ENCODE measurements at regions of chr9 and their contacts with region 1.

Region 1: GRCh38 chr9:91422758-91423711 is 597 bp downstream of the NFIL3 start:
- DNase-seq: peak; percentile 61 to 72 (median 67)
- H3K4me3 ChIP-seq: peak overlapping the region; percentile 51 to 88
- H3K4me3 Mint-ChIP-seq: peak overlapping the region; percentile 86 to 98 (median 92)
- H3K27ac ChIP-seq: no peak overlapping the region
- H3K27ac Mint-ChIP-seq: peak overlapping the region; percentile 23 to 95 (median 84)
- H3K4me1 ChIP-seq: peaks cover 36% of the 10 kb centered on the region
- H3K4me1 Mint-ChIP-seq: peaks cover 35 to 46% (median 41%) of the 10 kb centered on the region in 4 donors
- H3K27me3 ChIP-seq: peaks cover 18% of the 10 kb centered on the region
- H3K27me3 Mint-ChIP-seq: peaks cover 28 to 29% of the 10 kb centered on the region in 2 donors

Region 2: DNA sequence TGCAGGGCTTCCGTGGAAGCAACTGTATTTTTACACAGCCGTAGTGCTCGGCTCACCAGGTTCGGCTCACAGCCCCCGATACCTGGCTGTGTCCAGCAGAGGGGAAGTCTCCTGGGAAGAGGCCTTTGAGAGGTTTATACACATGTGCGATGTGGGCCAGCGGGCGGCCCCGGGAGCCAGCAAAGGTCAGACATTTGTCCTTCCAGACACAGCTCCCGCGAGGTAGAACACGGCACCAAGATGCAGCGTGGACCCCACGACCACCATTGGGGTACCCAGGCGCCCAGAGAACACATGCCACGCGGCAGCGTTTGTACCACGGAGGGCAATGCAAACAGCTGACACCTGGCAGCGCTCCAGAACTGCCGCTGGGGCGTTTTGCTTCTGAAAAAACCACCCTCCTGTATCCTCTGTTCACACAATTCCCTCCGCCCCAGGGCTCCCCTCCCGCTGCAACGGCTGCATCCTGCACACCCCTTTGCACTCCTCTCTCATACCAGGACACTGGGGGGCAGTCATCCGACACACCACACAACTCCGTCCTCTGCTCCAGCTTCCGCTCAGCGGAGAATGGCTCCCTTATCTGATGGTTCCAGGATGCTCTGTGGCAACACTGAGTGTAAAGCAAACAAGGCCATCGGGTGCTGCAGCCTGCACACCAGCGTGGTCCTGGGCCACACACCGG is 386.1 kb before region 1 on chr9:
- CTCF ChIA-PET with region 1: interaction called, 121 read pairs
- POLR2A ChIA-PET with region 1: interaction called, 5 read pairs
- intact Hi-C with region 1: loop called (anchors 1 kb)
- DNase-seq: peak; percentile 42 to 61 (median 51)
- H3K4me3 ChIP-seq: no peak overlapping the region
- H3K4me3 Mint-ChIP-seq: peak overlapping the region in 3 of 8 donors; percentile 33 to 72 (median 52)
- H3K27ac ChIP-seq: no peak overlapping the region
- H3K27ac Mint-ChIP-seq: peak overlapping the region in 1 of 7 donors; percentile 25
- H3K4me1 ChIP-seq: peaks cover 12% of the 10 kb centered on the region
- H3K4me1 Mint-ChIP-seq: peaks cover 11 to 15% (median 12%) of the 10 kb centered on the region in 4 donors
- H3K27me3 ChIP-seq: no peaks in the 10 kb centered on the region
- H3K27me3 Mint-ChIP-seq: peaks cover 13 to 15% of the 10 kb centered on the region in 2 donors

Region 3: GRCh38 chr9:91193658-91194391 is 229.2 kb before region 1 on chr9:
- CTCF ChIA-PET with region 1: interaction called, 4 read pairs
- POLR2A ChIA-PET with region 1: no interaction called
- intact Hi-C with region 1: loop called (anchors 1 kb)
- DNase-seq: peak; percentile 68 to 75 (median 71)
- H3K4me3 ChIP-seq: peak overlapping the region; percentile 38 to 56
- H3K4me3 Mint-ChIP-seq: peak overlapping the region; percentile 87 to 96 (median 91)
- H3K27ac ChIP-seq: no peak overlapping the region
- H3K27ac Mint-ChIP-seq: peak overlapping the region; percentile 84 to 95 (median 89)
- H3K4me1 ChIP-seq: peaks cover 30% of the 10 kb centered on the region
- H3K4me1 Mint-ChIP-seq: peaks cover 16 to 38% (median 23%) of the 10 kb centered on the region in 4 donors
- H3K27me3 ChIP-seq: no peaks in the 10 kb centered on the region
- H3K27me3 Mint-ChIP-seq: no peaks in the 10 kb centered on the region

Region 4: GRCh38 chr9:91312717-91313344 is 110.2 kb before region 1 on chr9:
- CTCF ChIA-PET with region 1: no interaction called
- POLR2A ChIA-PET with region 1: no interaction called
- intact Hi-C with region 1: no loop called
- DNase-seq: no peak
- H3K4me3 ChIP-seq: no peak overlapping the region
- H3K4me3 Mint-ChIP-seq: no peak overlapping the region
- H3K27ac ChIP-seq: no peak overlapping the region
- H3K27ac Mint-ChIP-seq: peak overlapping the region in 1 of 7 donors; percentile 5
- H3K4me1 ChIP-seq: no peaks in the 10 kb centered on the region
- H3K4me1 Mint-ChIP-seq: peaks cover 0 to 14% (median 9%) of the 10 kb centered on the region in 4 donors
- H3K27me3 ChIP-seq: no peaks in the 10 kb centered on the region
- H3K27me3 Mint-ChIP-seq: no peaks in the 10 kb centered on the region

Region 5: DNA sequence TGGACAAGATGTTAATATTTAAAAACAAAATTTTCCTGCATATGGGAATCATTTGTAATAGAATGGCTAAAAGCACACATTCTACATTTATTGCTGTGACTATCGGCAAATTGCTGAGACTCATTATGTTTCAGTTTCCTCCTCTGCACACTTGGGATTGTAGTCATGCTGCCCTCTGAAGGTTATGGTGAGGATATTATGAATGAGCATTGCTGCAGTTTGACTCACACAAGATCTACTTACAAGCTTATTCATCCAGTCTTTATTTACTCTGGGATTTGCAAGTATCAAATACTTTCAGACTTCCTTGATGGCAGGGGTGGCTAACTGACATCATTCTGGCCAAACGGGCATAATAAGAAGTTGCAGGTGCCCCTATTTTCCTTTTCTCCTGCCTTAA is 10.1 kb after region 1 on chr9:
- CTCF ChIA-PET with region 1: interaction called, 10 read pairs
- POLR2A ChIA-PET with region 1: no interaction called
- intact Hi-C with region 1: no loop called
- DNase-seq: peak in 2 of 5 donors; percentile 12 to 24
- H3K4me3 ChIP-seq: no peak overlapping the region
- H3K4me3 Mint-ChIP-seq: no peak overlapping the region
- H3K27ac ChIP-seq: no peak overlapping the region
- H3K27ac Mint-ChIP-seq: no peak overlapping the region
- H3K4me1 ChIP-seq: no peaks in the 10 kb centered on the region
- H3K4me1 Mint-ChIP-seq: no peaks in the 10 kb centered on the region
- H3K27me3 ChIP-seq: peaks cover 5% of the 10 kb centered on the region
- H3K27me3 Mint-ChIP-seq: peaks cover 3 to 7% of the 10 kb centered on the region in 2 donors

Region 6: DNA sequence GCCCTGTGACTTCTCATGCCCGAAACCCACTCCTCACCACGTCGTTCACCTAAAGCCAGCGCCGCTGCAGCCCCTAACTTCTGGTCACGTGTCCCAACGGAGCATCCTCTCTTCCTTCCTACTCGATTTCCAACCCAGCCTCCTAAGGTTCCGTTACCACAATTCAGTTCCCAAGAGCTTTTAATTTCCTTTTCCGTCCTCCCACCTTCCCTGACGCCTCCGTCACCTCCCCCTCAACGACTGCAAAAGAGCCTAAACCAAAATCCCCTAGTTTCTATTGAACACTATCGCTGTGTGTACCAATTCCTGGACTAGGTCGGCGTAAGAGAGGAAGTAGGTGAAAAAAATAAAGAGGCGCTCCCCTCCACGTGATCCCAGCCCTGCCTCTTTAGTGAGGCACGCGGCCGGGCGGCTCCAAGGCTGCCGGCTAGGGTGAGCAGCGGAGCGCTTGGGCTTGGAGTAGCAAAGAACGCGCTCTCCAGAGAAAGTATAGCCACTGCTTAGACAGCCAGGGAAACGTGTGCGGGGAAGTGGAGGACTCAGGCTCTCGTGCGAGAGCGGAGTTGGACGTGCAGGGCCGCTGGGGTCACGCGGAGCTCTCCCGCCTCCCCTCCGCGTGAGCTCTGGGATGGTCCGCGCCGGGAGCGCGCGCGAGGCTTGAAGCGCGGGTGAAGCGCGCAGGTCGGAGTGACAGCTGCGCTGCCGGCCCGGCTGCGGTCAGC is 902.4 kb after region 1 on chr9 and contains the starts of genes CENPP and NOL8:
- CTCF ChIA-PET with region 1: no interaction called
- POLR2A ChIA-PET with region 1: no interaction called
- intact Hi-C with region 1: loop called (anchors 10 kb)
- DNase-seq: peak; percentile 89 to 91 (median 91)
- H3K4me3 ChIP-seq: peak within 1 kb of the TSS; percentile 97 to 100
- H3K4me3 Mint-ChIP-seq: peak within 1 kb of the TSS; percentile 95 to 99 (median 98)
- H3K27ac ChIP-seq: peak within 1 kb of the TSS; percentile 92
- H3K27ac Mint-ChIP-seq: peak within 1 kb of the TSS; percentile 91 to 100 (median 99)
- H3K4me1 ChIP-seq: peaks cover 26% of the 10 kb centered on the region
- H3K4me1 Mint-ChIP-seq: peaks cover 8 to 41% (median 30%) of the 10 kb centered on the region in 4 donors
- H3K27me3 ChIP-seq: no peaks in the 10 kb centered on the region
- H3K27me3 Mint-ChIP-seq: no peaks in the 10 kb centered on the region
- total RNA-seq, gene CENPP: 0.55 to 4.3 TPM
- total RNA-seq, gene NOL8: 93.9 to 104 TPM

Measured in CD4-positive, alpha-beta memory T cell (primary cell).